Activated CD8-positive, alpha-beta T cell treated with anti-CD3 and anti-CD28 coated beads, Interleukin-2, amount 10 ng/mL, durations not matched to agents 7 days and 5 days (primary cell): ENCODE measurements at regions of chr13 and their contacts with region 1.

Region 1: GRCh38 chr13:75326173-75327134 is 155.5 kb downstream of the TBC1D4 start:
- DNase-seq: peak; percentile 70
- ATAC-seq: peak; percentile 90
- H3K4me3 Mint-ChIP-seq: peak overlapping the region; percentile 89
- H3K27ac Mint-ChIP-seq: peak overlapping the region; percentile 98
- H3K4me1 Mint-ChIP-seq: peaks cover 45% of the 10 kb centered on the region
- H3K27me3 Mint-ChIP-seq: no peaks in the 10 kb centered on the region

Region 2: GRCh38 chr13:75302071-75302698 is 24.3 kb before region 1 on chr13:
- CTCF ChIA-PET with region 1: interaction called, 10 read pairs
- POLR2A ChIA-PET with region 1: interaction called, 14 read pairs
- DNase-seq: no peak
- ATAC-seq: no peak
- H3K4me3 Mint-ChIP-seq: no peak overlapping the region
- H3K27ac Mint-ChIP-seq: no peak overlapping the region
- H3K4me1 Mint-ChIP-seq: peaks cover 5% of the 10 kb centered on the region
- H3K27me3 Mint-ChIP-seq: no peaks in the 10 kb centered on the region

Region 3: DNA sequence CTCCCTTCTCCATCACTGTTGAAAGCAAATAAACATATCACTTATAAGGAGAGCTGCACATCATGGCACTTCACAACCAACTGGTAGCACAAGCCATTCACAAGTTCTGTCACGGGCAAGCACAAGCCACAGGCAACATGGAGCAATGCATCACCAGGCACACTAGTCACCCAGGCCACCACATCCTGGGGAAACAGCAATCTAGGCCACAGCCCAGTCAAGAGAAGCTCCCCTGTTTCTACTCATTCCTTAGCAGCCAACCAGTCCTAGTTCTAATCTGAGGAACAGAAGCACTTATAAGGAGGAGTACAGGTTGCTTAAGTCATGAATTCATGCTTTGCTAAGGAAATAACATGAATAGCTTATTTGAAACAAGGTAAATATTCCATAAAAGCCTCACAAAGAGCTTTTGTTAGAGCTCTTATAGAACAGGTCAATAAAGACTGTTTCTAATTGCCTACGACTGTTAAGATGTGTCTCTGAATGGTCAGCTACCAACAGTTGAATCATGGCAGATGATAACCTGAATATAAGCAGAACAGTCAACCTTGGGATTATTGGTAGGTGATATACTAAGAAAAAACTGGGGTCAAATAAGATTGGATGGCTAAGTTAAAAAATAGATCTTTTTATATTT is 13.5 kb before region 1 on chr13:
- CTCF ChIA-PET with region 1: interaction called, 21 read pairs
- POLR2A ChIA-PET with region 1: interaction called, 72 read pairs
- DNase-seq: peak; percentile 77
- ATAC-seq: peak; percentile 94
- H3K4me3 Mint-ChIP-seq: no peak overlapping the region
- H3K27ac Mint-ChIP-seq: peak overlapping the region; percentile 54
- H3K4me1 Mint-ChIP-seq: peaks cover 42% of the 10 kb centered on the region
- H3K27me3 Mint-ChIP-seq: no peaks in the 10 kb centered on the region

Region 4: GRCh38 chr13:75357576-75358289 is 31.3 kb after region 1 on chr13:
- CTCF ChIA-PET with region 1: interaction called, 18 read pairs
- POLR2A ChIA-PET with region 1: interaction called, 13 read pairs
- DNase-seq: peak; percentile 67
- ATAC-seq: peak; percentile 93
- H3K4me3 Mint-ChIP-seq: no peak overlapping the region
- H3K27ac Mint-ChIP-seq: no peak overlapping the region
- H3K4me1 Mint-ChIP-seq: peaks cover 12% of the 10 kb centered on the region
- H3K27me3 Mint-ChIP-seq: no peaks in the 10 kb centered on the region

Region 5: DNA sequence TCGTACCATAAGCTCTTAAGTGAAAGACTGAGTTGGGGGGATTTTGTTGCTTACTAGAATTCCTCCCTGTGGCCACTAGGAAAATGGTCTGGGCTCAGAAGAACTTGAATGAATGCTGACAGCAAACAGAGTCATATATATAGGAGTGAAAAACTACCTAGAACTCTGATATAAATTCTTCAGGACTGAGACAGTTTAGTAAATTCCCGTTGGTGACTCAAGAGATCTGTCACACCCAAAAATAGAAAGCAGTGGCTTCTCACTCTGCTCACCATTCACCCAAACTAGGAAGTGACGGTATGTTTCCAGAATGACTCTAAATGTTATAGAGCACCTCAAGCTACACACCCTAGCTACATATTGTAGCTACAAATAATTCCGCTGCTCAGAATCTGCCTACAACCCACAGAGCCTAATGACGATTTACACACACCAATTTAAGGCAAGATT is 39.3 kb after region 1 on chr13:
- CTCF ChIA-PET with region 1: interaction called, 28 read pairs
- POLR2A ChIA-PET with region 1: interaction called, 18 read pairs
- DNase-seq: peak; percentile 41
- ATAC-seq: peak; percentile 91
- H3K4me3 Mint-ChIP-seq: peak overlapping the region; percentile 25
- H3K27ac Mint-ChIP-seq: peak overlapping the region; percentile 66
- H3K4me1 Mint-ChIP-seq: peaks cover 27% of the 10 kb centered on the region
- H3K27me3 Mint-ChIP-seq: peaks cover 1% of the 10 kb centered on the region